ENCODE measurements at regions of chr10 and their contacts with region 1.

Region 1: GRCh38 chr10:71812016-71812912 is 38.8 kb downstream of the PSAP start:
- DNase-seq: peak; percentile 41 to 97 (median 75)

Region 2: GRCh38 chr10:71319042-71319799 is 493.0 kb before region 1 on chr10 and contains the start of gene SLC29A3:
- intact Hi-C with region 1: loop called (anchors 5 kb)
- DNase-seq: peak; percentile 59 to 97 (median 83)

Region 3: DNA sequence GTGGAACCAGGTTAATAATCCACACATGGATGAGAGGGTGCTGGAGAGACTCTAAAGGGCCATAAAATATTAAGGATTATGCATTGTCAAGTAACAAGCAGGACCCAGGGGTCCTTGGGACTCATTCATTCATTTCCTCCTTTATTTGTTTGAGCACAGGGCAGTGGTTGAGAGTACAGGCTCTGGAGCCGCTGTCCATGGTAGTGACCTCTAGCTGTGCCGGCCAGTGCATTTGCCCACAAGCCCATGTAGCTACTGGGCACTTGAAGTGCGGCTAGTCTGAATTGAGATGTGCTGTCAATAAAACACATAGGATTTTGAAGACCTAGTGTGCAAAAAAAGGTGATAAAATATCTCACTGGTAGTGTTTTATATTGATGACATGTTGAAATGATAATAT is 230.2 kb before region 1 on chr10:
- intact Hi-C with region 1: no loop called
- DNase-seq: peak in 4 of 10 donors; percentile 29 to 92 (median 49)

Region 4: GRCh38 chr10:71713135-71714030 is 98.9 kb before region 1 on chr10:
- intact Hi-C with region 1: loop called (anchors 5 kb)
- DNase-seq: peak; percentile 67 to 97 (median 80)

Region 5: DNA sequence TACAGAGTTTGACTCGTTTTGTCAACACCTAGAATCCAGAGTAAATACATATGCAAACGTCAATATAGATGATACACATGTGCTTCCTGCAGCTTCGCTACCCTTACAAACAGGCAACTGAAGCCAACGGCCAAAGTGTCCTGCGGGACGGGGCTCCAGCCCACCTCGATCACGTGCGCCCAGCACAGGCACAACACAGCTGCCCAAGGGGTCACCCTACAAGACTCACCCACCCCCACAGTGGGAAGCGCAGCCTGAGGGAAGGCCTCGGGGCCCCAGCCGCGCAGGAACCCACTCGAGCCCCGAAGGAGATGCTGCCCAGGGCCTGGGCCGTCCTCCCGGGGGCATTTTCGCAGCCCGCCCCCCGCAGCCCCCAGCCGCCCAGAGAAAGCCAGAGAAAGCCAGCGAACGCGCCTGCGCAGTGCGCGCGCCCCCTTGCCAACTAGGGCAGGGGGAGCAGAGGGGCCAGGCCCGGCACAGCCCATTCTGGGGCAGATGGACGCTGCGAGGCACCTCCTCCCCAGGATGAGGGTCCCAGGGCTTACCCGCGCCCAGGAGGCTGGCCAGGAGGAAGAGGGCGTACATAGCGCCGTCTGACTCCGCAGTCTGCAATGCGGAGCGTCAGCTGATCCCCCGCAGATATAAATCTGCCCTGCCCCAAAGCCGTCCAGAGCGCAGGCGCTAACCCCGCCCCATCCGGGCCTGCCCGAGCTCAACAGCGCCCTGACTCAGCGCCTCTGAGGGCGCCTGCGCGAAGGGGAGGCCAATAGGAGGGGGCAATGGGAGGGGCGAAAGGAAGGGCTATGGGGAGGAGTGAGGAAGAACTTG is 38.6 kb after region 1 on chr10 and contains the start of gene PSAP:
- intact Hi-C with region 1: no loop called
- DNase-seq: peak; percentile 96 to 100 (median 98)

Region 6: GRCh38 chr10:71864861-71865473 is 52.7 kb after region 1 on chr10:
- intact Hi-C with region 1: no loop called
- DNase-seq: peak in 1 of 10 donors; percentile 53

Region 7: GRCh38 chr10:71899665-71900412 is 87.6 kb after region 1 on chr10:
- intact Hi-C with region 1: loop called (anchors 5 kb)
- DNase-seq: peak in 2 of 10 donors; percentile 43 to 73